Esophagus muscularis mucosa (tissue), 4 donors: ENCODE measurements at regions of chr3 and their contacts with region 1.

Region 1: GRCh38 chr3:114383875-114384557 is 90.2 kb downstream of the TIGIT start:
- DNase-seq: no peak
- H3K4me3 ChIP-seq: peak overlapping the region; percentile 45 to 54 (median 53)
- H3K27ac ChIP-seq: peak overlapping the region; percentile 74 to 82 (median 78)
- H3K4me1 ChIP-seq: peaks cover 33 to 46% (median 42%) of the 10 kb centered on the region in 4 donors
- H3K27me3 ChIP-seq: no peaks in the 10 kb centered on the region
- CTCF ChIP-seq: peak in 2 of 3 experiments; percentile 95 to 96
- EP300 ChIP-seq: no peak
- POLR2A ChIP-seq: no peak

Region 2: DNA sequence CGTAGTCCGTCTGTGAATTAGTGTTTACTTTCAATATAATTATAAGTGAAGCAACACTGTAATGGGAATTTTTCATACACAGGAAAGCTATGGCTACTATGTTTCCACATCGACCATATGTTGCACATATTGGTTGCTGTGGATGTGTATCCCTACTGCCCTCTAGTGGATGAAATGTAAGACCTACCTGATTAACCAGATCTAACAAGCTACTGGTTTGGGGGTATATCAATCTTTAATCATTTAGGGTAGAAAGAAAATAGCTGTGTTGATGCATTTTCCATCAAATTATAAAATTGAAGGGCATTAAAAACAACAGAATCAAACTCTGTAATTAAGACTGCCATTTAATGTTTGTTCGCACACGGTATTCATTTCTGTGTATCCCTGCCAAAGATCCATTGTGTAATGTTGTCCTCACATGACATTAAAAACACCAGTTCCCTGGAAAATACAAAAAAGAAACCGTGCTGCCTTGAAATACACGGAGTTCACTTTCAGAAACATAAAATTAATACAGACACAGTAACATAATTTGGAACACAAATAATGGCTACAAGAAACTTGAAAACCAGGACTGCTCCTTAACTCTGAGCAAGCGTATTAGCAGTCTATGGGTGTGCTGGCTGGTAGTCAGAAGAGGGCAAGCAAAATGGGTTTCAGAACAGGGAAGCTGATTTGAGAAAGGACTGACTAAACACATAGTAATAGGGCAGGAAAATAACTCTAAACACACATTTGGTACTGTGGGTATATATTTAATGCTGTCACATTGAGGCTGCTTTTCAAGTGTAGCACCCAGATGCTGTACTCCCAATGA is 34.9 kb after region 1 on chr3:
- intact Hi-C with region 1: loop called (anchors 5 kb)
- DNase-seq: no peak
- H3K4me3 ChIP-seq: peak overlapping the region in 3 of 4 donors; percentile 27 to 39 (median 33)
- H3K27ac ChIP-seq: peak overlapping the region; percentile 30 to 56 (median 44)
- H3K4me1 ChIP-seq: peaks cover 16 to 29% (median 25%) of the 10 kb centered on the region in 4 donors
- H3K27me3 ChIP-seq: no peaks in the 10 kb centered on the region
- CTCF ChIP-seq: peak; percentile 73 to 84 (median 83)
- EP300 ChIP-seq: no peak
- POLR2A ChIP-seq: no peak

Region 3: DNA sequence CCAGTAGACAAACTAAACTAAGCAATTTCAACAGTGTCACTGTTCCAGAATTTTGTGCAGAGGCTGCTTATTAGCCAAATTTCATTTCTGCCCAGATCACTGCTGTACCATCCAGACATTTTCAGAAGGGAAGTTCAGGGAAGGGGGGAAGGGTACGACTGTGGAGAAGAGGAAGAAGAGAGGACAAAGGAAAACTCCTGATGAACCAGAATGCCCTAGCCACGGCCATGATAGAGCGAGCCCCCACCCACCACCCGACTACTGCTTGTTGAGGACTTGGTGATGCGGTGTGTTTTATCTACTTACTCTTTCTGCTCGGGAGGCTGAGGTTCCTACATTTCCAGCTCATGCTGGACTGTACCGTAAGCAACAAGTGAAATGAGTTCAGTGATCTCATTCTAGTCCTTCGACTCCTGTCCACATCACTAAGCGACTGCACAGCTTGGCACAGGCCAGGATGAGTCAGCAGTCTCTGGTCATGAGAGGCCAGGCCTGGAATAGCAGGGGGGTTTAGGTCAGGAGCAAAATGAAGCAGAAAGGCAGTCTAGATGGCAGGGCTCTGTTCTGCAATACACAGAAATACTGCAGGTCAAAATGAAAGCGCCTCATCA is 240.7 kb after region 1 on chr3:
- intact Hi-C with region 1: loop called (anchors 5 kb)
- DNase-seq: peak; percentile 97
- H3K4me3 ChIP-seq: peak overlapping the region; percentile 49 to 60 (median 56)
- H3K27ac ChIP-seq: peak overlapping the region; percentile 93 to 95 (median 94)
- H3K4me1 ChIP-seq: peaks cover 46 to 78% (median 67%) of the 10 kb centered on the region in 4 donors
- H3K27me3 ChIP-seq: no peaks in the 10 kb centered on the region
- CTCF ChIP-seq: no peak
- EP300 ChIP-seq: no peak
- POLR2A ChIP-seq: peak; percentile 14

Region 4: DNA sequence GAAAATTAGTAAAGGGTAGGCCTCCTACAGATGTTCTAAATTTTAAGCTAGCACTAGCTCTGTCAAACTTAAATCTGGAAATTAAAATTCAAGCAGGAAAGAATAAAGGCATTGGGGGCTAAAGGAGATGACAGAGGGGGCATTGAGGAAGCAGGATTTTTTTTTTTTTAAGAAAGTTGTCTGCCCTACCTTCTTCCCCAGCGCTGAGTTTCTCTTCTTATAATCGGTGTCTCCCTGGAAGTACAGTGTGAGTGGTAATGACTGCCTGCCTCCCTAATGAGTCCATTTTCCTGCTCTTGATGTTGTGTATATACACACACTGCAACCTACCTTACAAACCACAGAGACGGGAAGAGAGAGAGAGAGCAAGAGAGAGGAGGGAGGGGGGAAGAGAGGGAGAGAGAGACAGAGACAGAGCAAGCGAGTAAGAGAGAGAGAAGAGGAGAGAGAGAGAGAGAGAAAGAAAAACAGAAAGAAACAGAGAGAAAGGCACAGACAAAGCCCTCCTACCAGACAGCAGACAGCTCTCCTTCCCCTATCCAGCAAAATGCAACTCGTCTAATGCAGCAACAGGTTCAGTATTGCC is 716.1 kb after region 1 on chr3:
- intact Hi-C with region 1: loop called (anchors 5 kb)
- DNase-seq: no peak
- H3K4me3 ChIP-seq: peak overlapping the region; percentile 42 to 46 (median 46)
- H3K27ac ChIP-seq: peak overlapping the region; percentile 43 to 70 (median 67)
- H3K4me1 ChIP-seq: peaks cover 23 to 47% (median 42%) of the 10 kb centered on the region in 4 donors
- H3K27me3 ChIP-seq: no peaks in the 10 kb centered on the region
- CTCF ChIP-seq: no peak
- EP300 ChIP-seq: no peak
- POLR2A ChIP-seq: no peak

Region 5: GRCh38 chr3:115147329-115148141 is 763.5 kb after region 1 on chr3:
- intact Hi-C with region 1: loop called (anchors 5 kb)
- DNase-seq: peak; percentile 100
- H3K4me3 ChIP-seq: peak overlapping the region; percentile 87 to 99 (median 90)
- H3K27ac ChIP-seq: peak overlapping the region; percentile 97 to 100 (median 99)
- H3K4me1 ChIP-seq: peaks cover 16 to 36% (median 33%) of the 10 kb centered on the region in 4 donors
- H3K27me3 ChIP-seq: no peaks in the 10 kb centered on the region
- CTCF ChIP-seq: no peak
- EP300 ChIP-seq: no peak
- POLR2A ChIP-seq: peak; percentile 66